ENCODE measurements at regions of chr10 and their contacts with region 1.

Region 1: GRCh38 chr10:36888929-36889573 is 236.3 kb upstream of the ANKRD30A start:
- DNase-seq: peak; percentile 74
- H3K4me3 ChIP-seq: no peak overlapping the region
- H3K27ac ChIP-seq: no peak overlapping the region
- H3K4me1 ChIP-seq: peaks cover 4% of the 10 kb centered on the region
- CTCF ChIP-seq: peak; percentile 91

Region 2: DNA sequence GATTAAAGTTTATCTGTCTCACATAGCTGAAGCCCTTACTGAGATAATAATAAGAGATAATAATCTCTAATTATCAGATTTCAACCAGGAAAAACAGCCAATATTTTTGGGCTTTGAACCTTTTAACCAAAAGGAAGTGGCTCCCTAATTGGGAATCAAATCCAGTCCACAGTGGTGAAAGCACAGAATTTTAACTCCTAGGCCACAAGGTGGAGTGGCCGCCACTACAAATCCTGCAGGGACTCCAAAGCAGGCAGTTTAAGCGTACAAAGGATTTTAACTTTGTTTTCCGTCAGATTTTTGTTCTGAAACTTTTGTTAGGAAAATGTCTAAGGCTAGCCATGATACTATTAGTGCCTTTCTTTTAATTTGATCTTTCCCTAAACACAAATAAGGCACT is 1652.3 kb before region 1 on chr10:
- CTCF ChIA-PET with region 1: no interaction called
- POLR2A ChIA-PET with region 1: no interaction called
- intact Hi-C with region 1: loop called (anchors 10 kb)
- DNase-seq: no peak
- H3K4me3 ChIP-seq: no peak overlapping the region
- H3K27ac ChIP-seq: no peak overlapping the region
- H3K4me1 ChIP-seq: no peaks in the 10 kb centered on the region
- CTCF ChIP-seq: peak; percentile 44

Region 3: GRCh38 chr10:36280321-36280741 is 608.7 kb before region 1 on chr10:
- CTCF ChIA-PET with region 1: no interaction called
- POLR2A ChIA-PET with region 1: no interaction called
- intact Hi-C with region 1: loop called (anchors 10 kb)
- DNase-seq: no peak
- H3K4me3 ChIP-seq: no peak overlapping the region
- H3K27ac ChIP-seq: no peak overlapping the region
- H3K4me1 ChIP-seq: no peaks in the 10 kb centered on the region
- CTCF ChIP-seq: no peak

Region 4: DNA sequence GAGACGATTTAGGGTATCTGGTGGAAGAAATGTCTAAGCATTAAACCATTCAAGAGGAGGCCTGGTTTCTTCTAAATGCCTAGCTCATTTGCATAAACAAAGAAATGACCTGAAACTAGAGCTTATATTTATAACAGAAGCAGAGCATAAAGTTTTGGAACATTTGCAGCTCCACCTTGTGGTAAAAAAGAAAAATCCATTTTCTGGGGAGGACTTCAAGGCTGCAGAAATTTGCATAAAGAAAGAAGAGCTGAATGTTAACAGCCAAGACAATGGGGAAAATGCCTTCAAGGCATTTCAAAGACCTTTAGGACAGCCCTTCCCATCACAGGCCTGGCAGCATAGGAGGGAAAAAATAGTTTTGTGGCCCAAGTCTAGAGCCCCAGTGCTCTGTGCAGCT is 606.4 kb after region 1 on chr10:
- CTCF ChIA-PET with region 1: no interaction called
- POLR2A ChIA-PET with region 1: no interaction called
- intact Hi-C with region 1: loop called (anchors 10 kb)
- DNase-seq: peak; percentile 9
- H3K4me3 ChIP-seq: no peak overlapping the region
- H3K27ac ChIP-seq: no peak overlapping the region
- H3K4me1 ChIP-seq: no peaks in the 10 kb centered on the region
- CTCF ChIP-seq: peak; percentile 71

Region 5: DNA sequence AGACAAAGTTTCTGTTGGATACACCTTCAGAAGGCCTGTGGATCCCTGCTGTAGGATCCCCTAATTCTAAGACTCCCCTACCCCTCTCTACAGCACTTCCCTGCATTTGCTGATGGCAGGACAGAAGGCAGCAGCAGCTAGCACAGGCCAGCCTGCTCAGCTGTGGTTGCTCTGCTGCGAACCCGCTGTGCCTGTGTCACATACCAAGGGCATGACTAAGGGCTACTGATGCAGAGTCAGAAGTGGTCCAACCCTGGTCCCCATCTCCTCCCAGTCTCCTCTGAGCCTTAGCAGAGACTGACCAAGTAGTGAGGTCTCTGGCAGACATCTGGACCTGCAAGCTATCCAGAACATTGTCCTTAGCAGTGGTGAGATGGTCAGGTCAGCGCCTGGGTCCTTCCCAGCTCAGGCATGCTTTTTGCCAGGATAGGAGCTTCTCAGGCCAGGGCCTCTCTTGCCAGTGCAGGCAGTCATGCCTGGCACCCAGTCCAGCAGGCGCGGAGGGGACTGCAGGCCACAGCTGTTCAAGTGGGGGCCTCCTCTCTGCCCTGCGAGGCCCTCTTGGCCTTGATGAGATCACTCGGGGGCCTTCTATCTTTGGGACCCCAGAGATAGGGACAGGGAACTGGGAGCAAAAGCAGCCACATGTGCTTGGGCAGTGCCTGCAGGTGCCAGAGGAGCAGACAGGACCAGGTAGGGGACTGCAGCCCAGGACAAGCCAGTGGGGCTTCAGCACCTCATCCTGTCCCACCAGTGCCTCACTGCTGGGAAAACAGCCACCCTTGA is 822.0 kb after region 1 on chr10:
- CTCF ChIA-PET with region 1: no interaction called
- POLR2A ChIA-PET with region 1: no interaction called
- intact Hi-C with region 1: no loop called
- DNase-seq: no peak
- H3K4me3 ChIP-seq: no peak overlapping the region
- H3K27ac ChIP-seq: no peak overlapping the region
- H3K4me1 ChIP-seq: no peaks in the 10 kb centered on the region
- CTCF ChIP-seq: no peak

Measured in OCI-LY7 (cell line).